ENCODE measurements at regions of chr4 and their contacts with region 1.

Region 1: DNA sequence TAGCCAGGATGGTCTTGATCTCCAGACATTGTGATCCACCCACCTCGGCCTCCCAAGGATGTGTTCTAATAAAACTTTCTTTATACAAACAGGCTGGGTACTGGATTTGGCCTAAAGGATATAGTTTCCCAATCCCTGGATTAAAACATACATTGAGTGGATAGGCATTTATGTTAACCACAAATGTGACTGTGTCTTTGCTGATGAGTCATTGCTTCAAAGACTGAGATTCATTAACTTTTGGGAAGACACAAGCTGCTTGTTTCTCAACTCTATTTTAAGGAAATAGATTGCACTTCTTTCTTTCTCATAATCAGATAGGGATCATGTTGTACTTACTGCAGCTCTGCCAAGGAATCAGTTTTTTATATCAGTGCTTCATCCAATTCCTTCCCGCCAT is 131.3 kb upstream of the AGA start:
- DNase-seq: peak; percentile 44
- ATAC-seq: peak; percentile 66
- H3K4me3 ChIP-seq: no peak overlapping the region; a peak in 1 of 4 replicates
- H3K27ac ChIP-seq: no peak overlapping the region
- H3K4me1 ChIP-seq: peaks cover 7 to 20% of the 10 kb centered on the region in 2 experiments; a peak in 3 of 4 replicates
- H3K27me3 ChIP-seq: no peaks in the 10 kb centered on the region
- CTCF ChIP-seq: no peak
- POLR2A ChIP-seq: no peak
- RAD21 ChIP-seq: no peak

Region 2: DNA sequence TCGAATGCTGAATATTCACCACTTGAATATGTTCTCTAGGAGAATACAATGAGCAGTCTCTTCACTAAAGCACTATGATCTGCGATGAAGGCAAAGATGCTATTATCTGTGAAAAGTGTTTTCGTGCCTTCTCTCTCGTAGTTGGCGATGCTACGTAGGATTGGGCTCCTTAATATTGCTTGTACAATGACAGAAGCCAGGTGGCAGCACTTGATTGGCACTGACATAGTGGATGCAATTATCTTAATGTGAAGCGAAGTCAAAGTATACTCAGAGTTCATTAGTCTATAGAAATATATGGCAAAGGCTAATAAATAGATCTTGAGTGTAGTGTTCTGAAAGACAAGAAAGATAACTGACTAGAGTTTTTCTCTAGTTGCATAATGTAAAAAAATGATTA is 1004.4 kb after region 1 on chr4:
- CTCF ChIA-PET with region 1: no interaction called
- POLR2A ChIA-PET with region 1: no interaction called
- RAD21 ChIA-PET with region 1: no interaction called
- intact Hi-C with region 1: loop called (anchors 10 kb)
- DNase-seq: no peak
- ATAC-seq: peak; percentile 68
- H3K4me3 ChIP-seq: no peak overlapping the region
- H3K27ac ChIP-seq: no peak overlapping the region
- H3K4me1 ChIP-seq: no peaks in the 10 kb centered on the region
- H3K27me3 ChIP-seq: no peaks in the 10 kb centered on the region
- CTCF ChIP-seq: peak in 2 of 3 experiments; percentile 49 to 64; a peak in 4 of 6 replicates
- POLR2A ChIP-seq: no peak
- RAD21 ChIP-seq: peak; percentile 69